MCF 10A (cell line): ENCODE measurements at regions of chr10 and their contacts with region 1.

Region 1: DNA sequence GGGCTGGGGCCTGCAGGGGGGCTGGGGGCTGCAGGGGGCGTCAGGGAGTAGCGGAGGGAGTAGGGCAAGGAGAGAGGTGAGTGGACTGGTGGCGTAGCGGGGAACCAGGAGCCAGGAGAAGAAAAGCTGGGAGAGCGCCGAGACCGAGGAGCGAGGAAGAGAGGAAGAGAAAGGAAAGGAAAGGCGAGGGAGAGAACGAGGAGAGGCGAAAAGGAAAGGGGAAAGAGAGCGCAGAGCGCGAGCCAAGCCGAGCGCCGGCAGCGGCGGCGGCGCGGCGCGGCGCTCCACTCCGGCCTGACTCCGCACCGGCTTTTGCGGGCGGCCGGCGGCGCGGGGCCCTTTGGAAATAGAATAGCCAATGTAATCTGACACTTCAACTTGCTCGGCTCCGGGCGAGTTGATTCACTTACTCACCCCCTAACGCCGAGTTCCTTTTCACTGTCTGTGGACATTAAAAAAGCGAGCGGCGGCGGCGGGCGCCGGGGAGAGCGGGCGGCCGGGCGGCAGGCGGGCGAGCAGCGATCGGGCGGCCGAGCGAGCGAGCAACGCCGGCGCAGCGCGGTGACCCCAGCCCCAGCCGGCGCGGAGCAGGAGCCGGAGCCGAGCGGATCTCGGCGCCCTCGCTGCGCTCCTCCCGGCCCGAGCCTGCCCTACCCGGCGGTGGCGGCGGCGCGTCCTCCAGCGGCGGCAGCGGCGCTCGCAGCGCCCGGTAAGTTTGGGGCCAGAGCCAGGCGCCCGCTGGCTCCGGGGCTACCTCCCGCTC is at the start of gene ZMIZ1:
- DNase-seq: peak; percentile 95
- H3K4me3 Mint-ChIP-seq: peak within 1 kb of the TSS; percentile 84
- H3K27ac Mint-ChIP-seq: peak within 1 kb of the TSS; percentile 50
- H3K4me1 Mint-ChIP-seq: peaks cover 20% of the 10 kb centered on the region
- H3K27me3 Mint-ChIP-seq: no peaks in the 10 kb centered on the region
- CTCF ChIP-seq: peak; percentile 19
- total RNA-seq, gene ZMIZ1: 15.5 and 20.3 TPM in 2 replicates

Region 2: DNA sequence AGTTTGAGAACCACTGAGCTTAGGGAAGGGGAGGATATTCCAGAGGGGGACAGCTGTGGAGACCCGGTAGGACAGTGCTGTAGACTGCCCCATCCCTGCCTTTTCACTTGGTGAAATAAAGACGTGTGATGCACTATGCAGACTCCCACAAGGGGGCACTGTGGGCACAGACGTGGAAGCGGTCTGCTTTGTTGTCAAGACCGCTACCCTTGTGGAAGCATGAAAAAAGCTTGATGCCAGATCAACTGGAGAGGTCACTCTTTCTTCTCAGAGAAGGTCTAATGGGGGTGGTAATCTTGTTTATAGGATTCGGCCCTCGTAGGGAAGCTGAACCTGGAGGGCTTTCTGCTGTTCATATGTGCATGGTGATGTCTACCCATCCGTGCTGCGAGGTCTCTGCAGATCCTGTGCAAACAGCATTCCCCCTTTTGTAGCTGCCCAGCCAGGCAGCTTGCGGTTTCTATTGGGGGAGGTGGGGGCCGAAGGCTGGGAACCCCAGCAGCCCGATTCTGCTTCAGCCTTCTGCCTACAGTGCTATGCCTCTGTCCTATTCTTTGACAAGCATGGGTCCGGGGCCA is 1021.3 kb before region 1 on chr10:
- CTCF ChIA-PET with region 1: interaction called, 6 read pairs
- POLR2A ChIA-PET with region 1: no interaction called
- intact Hi-C with region 1: loop called (anchors 2 kb)
- DNase-seq: peak; percentile 79
- H3K4me3 Mint-ChIP-seq: no peak overlapping the region
- H3K27ac Mint-ChIP-seq: no peak overlapping the region
- H3K4me1 Mint-ChIP-seq: peaks cover 13% of the 10 kb centered on the region
- H3K27me3 Mint-ChIP-seq: no peaks in the 10 kb centered on the region
- CTCF ChIP-seq: peak; percentile 81

Region 3: DNA sequence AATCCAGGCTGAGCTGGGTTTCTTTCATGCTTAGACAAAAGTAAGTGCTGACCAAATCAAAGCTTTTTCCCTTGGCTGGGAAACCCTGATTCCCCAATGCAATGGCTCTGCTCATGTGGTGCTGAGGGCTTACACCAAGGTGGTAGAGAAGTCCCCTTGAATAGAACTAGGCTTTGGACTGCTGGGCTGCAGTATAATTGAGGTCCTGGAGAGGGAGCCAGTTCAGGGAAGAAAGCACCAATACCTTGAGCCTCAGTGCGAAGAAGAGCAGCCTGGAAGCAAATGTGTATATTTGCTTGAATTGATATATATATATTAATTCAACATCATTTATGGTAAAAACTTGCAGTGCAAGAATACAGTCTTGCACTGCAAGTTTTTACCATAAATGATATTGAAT is 644.0 kb before region 1 on chr10:
- CTCF ChIA-PET with region 1: no interaction called
- POLR2A ChIA-PET with region 1: no interaction called
- intact Hi-C with region 1: loop called (anchors 2 kb)
- DNase-seq: peak; percentile 42
- H3K4me3 Mint-ChIP-seq: no peak overlapping the region
- H3K27ac Mint-ChIP-seq: no peak overlapping the region
- H3K4me1 Mint-ChIP-seq: no peaks in the 10 kb centered on the region
- H3K27me3 Mint-ChIP-seq: peaks cover 50% of the 10 kb centered on the region
- CTCF ChIP-seq: peak; percentile 49

Region 4: DNA sequence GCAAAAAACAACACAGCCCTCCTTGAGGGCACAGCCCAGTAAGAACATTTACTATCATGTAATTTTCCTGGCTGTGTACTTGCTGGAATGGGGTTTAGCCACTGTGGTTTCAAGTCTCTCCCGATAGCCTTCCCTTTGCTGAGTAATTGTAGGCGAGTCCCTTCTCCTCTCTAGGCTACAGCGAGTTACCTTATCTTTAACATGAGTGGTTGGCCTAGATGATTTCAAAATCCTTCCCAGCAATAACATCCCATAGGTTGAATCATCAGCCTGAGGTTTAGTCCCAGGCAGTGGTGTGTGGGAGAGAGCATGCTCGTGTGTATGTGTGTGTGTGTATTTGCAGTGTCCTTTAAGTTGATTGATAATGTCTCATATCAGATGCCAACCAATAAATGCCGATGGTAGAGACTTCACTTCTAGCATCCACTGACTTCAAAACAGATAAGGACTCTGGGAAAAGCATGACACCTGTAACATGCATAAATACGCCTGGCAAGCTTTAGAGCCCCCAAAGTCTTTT is 142.9 kb before region 1 on chr10:
- CTCF ChIA-PET with region 1: no interaction called
- POLR2A ChIA-PET with region 1: no interaction called
- intact Hi-C with region 1: loop called (anchors 5 kb)
- DNase-seq: peak; percentile 94
- H3K4me3 Mint-ChIP-seq: no peak overlapping the region
- H3K27ac Mint-ChIP-seq: peak overlapping the region; percentile 42
- H3K4me1 Mint-ChIP-seq: peaks cover 19% of the 10 kb centered on the region
- H3K27me3 Mint-ChIP-seq: no peaks in the 10 kb centered on the region
- CTCF ChIP-seq: no peak

Region 5: GRCh38 chr10:78972947-78973900 is 95.5 kb before region 1 on chr10:
- CTCF ChIA-PET with region 1: interaction called, 5 read pairs
- POLR2A ChIA-PET with region 1: interaction called, 11 read pairs
- intact Hi-C with region 1: loop called (anchors 2 kb)
- DNase-seq: peak; percentile 93
- H3K4me3 Mint-ChIP-seq: peak overlapping the region; percentile 78
- H3K27ac Mint-ChIP-seq: peak overlapping the region; percentile 51
- H3K4me1 Mint-ChIP-seq: peaks cover 36% of the 10 kb centered on the region
- H3K27me3 Mint-ChIP-seq: no peaks in the 10 kb centered on the region
- CTCF ChIP-seq: no peak

Region 6: DNA sequence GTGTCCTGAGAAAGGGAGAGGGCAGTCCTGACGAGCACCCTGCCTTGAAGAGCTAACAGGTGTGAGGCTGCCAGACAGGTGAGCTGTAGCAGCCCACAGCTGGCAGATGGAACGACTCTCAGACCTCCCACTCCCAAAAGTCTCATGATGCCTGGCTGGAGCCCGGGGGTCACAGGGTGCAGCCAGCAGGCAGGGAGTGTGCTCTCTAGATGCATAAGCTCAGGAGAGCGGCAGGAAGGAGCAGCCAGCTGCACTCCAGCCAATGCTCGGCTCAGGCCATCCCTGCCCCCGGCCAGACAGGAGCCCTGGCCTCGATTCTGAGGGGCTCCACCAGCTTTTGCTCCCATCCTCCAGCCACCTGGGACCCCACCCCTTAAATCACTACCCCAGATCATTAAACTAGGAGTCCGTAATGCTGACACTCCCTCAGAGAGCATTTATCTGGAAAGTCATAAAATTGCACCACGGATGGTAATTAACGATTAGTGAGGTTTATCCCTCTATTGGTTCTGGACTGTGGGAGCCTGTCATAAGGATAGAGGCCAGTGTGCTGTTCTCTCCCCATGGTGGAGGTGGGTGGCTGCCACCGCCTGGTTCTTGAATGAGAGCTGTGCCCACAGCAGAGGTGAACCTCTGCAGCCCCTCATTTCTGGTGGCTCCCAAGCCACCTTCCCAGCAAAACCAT is 63.5 kb before region 1 on chr10:
- CTCF ChIA-PET with region 1: no interaction called
- POLR2A ChIA-PET with region 1: no interaction called
- intact Hi-C with region 1: no loop called
- DNase-seq: no peak
- H3K4me3 Mint-ChIP-seq: no peak overlapping the region
- H3K27ac Mint-ChIP-seq: no peak overlapping the region
- H3K4me1 Mint-ChIP-seq: no peaks in the 10 kb centered on the region
- H3K27me3 Mint-ChIP-seq: peaks cover 14% of the 10 kb centered on the region
- CTCF ChIP-seq: no peak

Region 7: DNA sequence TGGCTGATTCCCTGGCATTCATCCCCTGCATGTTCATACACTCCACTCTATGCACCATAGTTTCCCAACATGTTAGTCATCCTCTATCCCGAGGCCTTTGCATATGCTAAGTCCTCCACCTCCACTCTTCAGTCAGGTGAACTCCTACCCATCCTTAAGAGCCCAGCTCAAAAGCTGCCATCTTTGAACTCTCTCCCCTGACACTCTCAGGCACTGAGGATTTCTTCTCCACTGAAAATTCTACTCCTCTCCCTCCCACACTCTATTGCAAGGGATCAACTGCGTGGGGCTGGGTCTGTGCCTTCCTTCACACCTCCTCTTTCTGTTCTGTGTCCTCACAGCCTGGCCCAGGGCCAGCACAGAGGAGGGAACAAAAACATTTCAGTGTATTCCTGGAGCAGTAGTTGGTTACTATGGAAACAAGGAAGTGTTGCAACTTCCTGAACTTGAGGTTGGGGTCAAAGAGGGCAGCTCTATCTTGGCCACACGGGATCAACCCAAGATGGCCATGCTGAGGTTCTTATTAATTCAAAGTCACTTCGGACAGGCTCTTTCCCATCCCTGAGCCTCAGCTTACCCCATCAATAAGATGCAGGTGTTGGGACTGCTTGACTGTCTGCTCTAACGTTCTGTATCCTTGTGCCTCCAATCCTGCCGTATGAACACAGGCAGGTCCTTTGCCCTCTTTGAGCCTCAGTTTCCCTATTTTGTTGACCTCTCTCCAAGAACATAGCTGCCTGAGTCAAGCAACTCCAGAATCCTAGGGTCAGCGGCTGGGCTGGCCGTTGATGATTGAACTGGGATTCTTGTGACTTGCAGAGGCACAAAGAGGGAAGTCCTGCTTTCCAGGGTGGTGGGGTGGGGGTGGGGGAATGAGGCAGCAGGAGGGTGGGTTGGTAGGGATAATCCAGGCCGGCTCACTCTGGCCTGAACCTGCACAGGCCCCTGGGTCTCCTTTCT is 15.5 kb after region 1 on chr10:
- CTCF ChIA-PET with region 1: interaction called, 7 read pairs
- POLR2A ChIA-PET with region 1: interaction called, 122 read pairs
- intact Hi-C with region 1: loop called (anchors 1 kb)
- DNase-seq: peak; percentile 98
- H3K4me3 Mint-ChIP-seq: peak overlapping the region; percentile 38
- H3K27ac Mint-ChIP-seq: peak overlapping the region; percentile 97
- H3K4me1 Mint-ChIP-seq: peaks cover 55% of the 10 kb centered on the region
- H3K27me3 Mint-ChIP-seq: no peaks in the 10 kb centered on the region
- CTCF ChIP-seq: no peak

Region 8: GRCh38 chr10:79127151-79127961 is 58.6 kb after region 1 on chr10:
- CTCF ChIA-PET with region 1: interaction called, 4 read pairs
- POLR2A ChIA-PET with region 1: interaction called, 3 read pairs
- intact Hi-C with region 1: loop called (anchors 5 kb)
- DNase-seq: peak; percentile 97
- H3K4me3 Mint-ChIP-seq: no peak overlapping the region
- H3K27ac Mint-ChIP-seq: no peak overlapping the region
- H3K4me1 Mint-ChIP-seq: peaks cover 13% of the 10 kb centered on the region
- H3K27me3 Mint-ChIP-seq: no peaks in the 10 kb centered on the region
- CTCF ChIP-seq: no peak